ENCODE measurements at regions of chr20 and their contacts with region 1.

Region 1: DNA sequence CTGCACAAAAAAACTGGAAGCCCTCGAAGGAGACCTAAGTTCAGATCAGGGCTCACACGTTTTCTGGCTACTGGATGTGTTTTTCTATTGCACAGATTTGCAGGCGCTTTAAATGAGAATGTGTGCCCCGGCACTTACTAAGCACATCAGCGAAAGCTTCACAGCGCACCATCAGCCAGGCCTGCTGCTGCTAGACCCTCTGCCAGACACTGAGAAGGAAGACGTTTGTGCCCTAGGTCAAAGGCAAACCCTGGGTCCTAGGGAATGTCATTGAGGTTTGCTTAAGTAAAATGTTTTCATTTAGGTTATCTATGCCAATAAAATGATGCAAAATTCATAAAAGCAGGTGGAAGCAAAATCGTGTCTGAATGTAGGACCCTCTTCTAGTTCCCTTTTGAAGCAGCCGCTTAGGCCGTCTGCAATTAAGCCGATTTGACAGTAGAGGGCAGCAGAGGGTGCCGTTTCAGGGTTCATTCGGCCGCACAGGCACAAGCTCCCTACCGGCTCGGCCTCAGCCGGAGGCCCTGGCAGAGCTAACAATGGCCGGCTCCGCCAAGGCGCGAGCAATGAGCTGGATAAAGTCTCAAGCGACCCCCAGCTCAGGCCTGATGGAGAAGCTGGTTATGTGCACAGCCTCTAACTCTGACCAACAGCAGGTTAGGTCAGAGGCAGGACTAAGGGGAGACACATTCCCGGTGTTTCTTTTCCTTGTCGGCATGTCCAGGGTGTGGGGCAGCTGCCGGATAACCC is 107.2 kb upstream of the FOXA2 start:
- DNase-seq: peak; percentile 78
- CTCF ChIP-seq: peak; percentile 86

Region 2: GRCh38 chr20:21956591-21956990 is 735.0 kb before region 1 on chr20:
- CTCF ChIA-PET with region 1: no interaction called
- POLR2A ChIA-PET with region 1: no interaction called
- DNase-seq: no peak
- CTCF ChIP-seq: no peak

Region 3: DNA sequence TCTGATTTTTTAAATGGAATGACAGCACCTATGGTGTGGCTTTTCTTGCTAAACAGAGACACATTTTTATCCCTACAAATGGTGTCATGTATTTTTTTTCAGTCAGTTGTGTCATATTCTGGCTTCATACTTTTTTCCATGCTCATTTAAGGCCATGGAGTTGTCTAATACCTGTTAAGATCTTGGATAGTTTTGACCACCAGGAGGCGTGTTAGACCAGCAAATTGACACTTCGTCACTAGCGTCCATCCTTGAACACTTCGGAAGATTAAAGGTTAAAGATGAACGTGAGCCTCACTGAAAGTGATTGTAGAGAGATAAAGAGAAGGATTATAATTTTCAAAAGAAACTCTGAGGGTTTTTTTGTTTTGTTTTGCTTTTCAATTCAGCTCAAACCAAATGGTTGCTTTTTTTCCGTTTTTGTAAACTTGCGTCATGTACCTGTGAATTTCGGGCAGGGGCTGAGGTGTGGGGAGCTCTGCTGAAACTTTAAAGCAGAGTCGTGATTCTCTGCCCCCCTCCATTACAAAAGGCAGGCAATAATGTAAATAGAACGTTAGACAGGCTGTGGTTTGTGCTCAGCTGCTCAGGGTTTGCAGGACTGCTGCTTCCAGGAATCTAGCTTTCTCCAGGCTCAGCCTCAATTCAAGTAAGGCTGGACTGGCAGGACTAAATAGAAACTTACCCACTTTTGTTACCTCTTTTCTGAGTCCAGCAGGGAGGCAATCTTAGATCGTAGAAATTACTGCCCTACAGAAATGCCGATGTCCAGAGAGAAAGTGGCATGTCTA is 352.3 kb before region 1 on chr20:
- CTCF ChIA-PET with region 1: interaction called, 77 read pairs
- POLR2A ChIA-PET with region 1: no interaction called
- DNase-seq: peak; percentile 37
- CTCF ChIP-seq: peak; percentile 74

Region 4: DNA sequence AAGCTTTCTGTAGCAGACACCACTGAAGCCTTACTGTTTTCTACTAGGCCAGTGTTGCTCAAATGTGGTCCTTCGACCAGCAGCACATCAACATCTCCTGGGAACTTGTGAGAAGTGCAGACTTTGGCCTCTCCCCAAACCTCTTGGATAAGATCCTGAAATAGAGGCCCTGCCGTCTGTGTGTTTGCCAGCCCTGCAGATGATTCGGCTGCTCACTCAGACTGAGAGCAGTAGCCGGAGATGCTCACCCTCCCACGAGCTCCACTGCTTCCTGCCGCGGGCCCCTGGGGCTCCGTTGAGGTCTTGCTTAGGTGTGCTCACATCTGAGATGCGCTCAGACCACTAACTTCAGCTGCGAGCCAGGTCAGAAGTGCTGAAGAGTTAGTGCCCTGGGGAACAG is 214.1 kb after region 1 on chr20:
- CTCF ChIA-PET with region 1: no interaction called
- POLR2A ChIA-PET with region 1: no interaction called
- DNase-seq: peak; percentile 17
- CTCF ChIP-seq: no peak

Region 5: GRCh38 chr20:22974353-22974752 is 282.8 kb after region 1 on chr20:
- CTCF ChIA-PET with region 1: interaction called, 40 read pairs
- POLR2A ChIA-PET with region 1: no interaction called
- DNase-seq: no peak
- CTCF ChIP-seq: no peak

Region 6: GRCh38 chr20:23235173-23236027 is 543.9 kb after region 1 on chr20:
- CTCF ChIA-PET with region 1: interaction called, 56 read pairs
- POLR2A ChIA-PET with region 1: no interaction called
- DNase-seq: peak; percentile 45
- CTCF ChIP-seq: peak; percentile 57

Region 7: DNA sequence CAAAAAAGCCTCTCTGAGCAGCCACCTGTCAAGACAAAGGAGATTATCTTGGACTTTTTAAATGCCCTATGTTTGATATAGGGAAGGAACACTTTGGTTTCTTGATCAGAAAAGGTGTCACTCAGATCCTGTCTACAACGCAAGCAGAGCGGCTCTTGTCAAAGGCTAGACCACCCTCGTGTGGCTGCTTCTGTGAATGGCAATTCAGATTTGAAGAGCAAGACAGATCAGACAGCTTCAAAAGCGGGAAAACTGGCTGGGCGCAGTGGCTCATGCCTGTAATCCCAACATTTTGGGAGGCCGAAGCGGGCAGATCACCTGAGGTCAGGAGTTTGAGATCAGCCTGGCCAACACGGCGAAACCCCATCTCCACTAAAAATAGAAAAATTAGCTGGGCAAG is 649.0 kb after region 1 on chr20:
- CTCF ChIA-PET with region 1: interaction called, 55 read pairs
- POLR2A ChIA-PET with region 1: no interaction called
- DNase-seq: peak; percentile 53
- CTCF ChIP-seq: peak; percentile 55

Measured in GM10248 (cell line).